AG04450 (cell line): ENCODE measurements at regions of chr17 and their contacts with region 1.

Region 1: DNA sequence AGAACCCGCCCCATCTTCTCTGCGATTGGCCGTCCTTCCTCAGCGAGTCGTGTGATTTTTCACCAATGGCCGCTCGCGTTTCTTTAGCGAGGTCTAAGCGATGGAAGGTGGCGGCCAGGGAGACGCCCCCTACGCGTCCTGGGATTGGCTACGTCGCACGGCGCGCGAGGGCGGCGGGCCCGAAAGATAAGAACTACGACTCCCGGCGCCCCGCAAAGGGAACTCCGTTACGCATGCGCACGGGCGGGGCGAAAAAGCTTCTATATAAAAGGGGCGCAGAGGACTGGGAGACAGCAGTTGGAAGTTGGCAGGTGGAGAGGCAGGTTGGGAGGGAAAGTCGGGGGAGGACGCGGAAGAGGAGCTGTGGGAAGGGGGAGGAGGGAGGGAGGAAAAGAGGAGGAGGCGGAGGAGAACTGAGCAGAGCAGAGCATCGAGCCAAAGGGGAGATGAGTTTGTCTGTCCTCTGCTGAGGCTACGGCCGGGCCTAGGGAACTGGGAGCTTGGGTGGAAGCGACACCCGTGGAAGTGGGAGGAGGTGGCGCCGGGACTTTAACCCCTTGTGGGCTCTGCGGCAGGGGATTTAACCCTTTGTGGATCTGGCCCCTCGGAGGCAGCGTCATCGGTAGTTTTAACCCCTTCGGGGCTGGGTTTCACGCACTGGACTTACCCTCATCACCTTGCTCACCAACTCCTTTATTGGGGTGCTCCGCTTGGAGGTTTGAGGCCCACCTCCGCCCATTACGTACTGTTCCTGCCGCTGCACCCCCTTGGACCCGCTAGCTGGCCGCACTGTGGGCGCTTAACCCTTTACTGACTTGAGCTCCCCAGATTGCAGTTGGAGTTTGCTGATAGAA is at the start of gene HEXIM1:
- DNase-seq: peak; percentile 99
- H3K4me3 ChIP-seq: peak within 1 kb of the TSS; percentile 96
- H3K27ac ChIP-seq: peak within 1 kb of the TSS; percentile 98
- H3K27me3 ChIP-seq: no peaks in the 10 kb centered on the region
- CTCF ChIP-seq: no peak
- polyA plus RNA-seq, gene HEXIM1: 12.4 and 13.2 TPM in 2 replicates

Region 2: GRCh38 chr17:44899069-44899782 is 249.2 kb before region 1 on chr17 and contains the start of gene EFTUD2:
- CTCF ChIA-PET with region 1: no interaction called
- POLR2A ChIA-PET with region 1: interaction called, 12 read pairs
- DNase-seq: peak; percentile 74
- H3K4me3 ChIP-seq: peak within 1 kb of the TSS; percentile 98
- H3K27ac ChIP-seq: peak within 1 kb of the TSS; percentile 94
- H3K27me3 ChIP-seq: no peaks in the 10 kb centered on the region
- CTCF ChIP-seq: no peak
- polyA plus RNA-seq, gene EFTUD2: 123 and 147 TPM in 2 replicates

Region 3: DNA sequence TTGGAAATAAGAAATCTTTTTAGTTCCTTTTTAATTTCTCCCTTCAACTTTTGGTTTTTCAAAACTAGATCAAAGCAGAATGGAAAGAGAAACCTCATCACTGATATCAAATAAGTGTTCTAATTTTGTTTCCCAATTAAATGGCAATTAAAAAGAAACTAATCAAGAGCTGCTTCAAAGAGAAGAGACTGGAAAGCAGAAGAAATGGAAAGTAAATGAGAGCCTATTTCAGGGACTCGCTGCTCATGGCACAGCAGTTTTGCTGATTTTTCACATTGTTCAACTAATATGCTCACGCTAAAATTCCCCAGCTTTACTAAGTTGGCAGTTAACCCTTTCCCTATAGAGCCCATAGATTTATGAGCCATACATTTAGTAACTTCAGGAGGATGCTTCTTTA is 80.8 kb before region 1 on chr17:
- CTCF ChIA-PET with region 1: no interaction called
- POLR2A ChIA-PET with region 1: no interaction called
- DNase-seq: no peak
- H3K4me3 ChIP-seq: no peak overlapping the region
- H3K27ac ChIP-seq: no peak overlapping the region
- H3K27me3 ChIP-seq: no peaks in the 10 kb centered on the region
- CTCF ChIP-seq: no peak

Region 4: GRCh38 chr17:45114163-45114932 is 34.1 kb before region 1 on chr17:
- CTCF ChIA-PET with region 1: no interaction called
- POLR2A ChIA-PET with region 1: no interaction called
- DNase-seq: no peak
- H3K4me3 ChIP-seq: no peak overlapping the region
- H3K27ac ChIP-seq: no peak overlapping the region
- H3K27me3 ChIP-seq: no peaks in the 10 kb centered on the region
- CTCF ChIP-seq: no peak

Region 5: DNA sequence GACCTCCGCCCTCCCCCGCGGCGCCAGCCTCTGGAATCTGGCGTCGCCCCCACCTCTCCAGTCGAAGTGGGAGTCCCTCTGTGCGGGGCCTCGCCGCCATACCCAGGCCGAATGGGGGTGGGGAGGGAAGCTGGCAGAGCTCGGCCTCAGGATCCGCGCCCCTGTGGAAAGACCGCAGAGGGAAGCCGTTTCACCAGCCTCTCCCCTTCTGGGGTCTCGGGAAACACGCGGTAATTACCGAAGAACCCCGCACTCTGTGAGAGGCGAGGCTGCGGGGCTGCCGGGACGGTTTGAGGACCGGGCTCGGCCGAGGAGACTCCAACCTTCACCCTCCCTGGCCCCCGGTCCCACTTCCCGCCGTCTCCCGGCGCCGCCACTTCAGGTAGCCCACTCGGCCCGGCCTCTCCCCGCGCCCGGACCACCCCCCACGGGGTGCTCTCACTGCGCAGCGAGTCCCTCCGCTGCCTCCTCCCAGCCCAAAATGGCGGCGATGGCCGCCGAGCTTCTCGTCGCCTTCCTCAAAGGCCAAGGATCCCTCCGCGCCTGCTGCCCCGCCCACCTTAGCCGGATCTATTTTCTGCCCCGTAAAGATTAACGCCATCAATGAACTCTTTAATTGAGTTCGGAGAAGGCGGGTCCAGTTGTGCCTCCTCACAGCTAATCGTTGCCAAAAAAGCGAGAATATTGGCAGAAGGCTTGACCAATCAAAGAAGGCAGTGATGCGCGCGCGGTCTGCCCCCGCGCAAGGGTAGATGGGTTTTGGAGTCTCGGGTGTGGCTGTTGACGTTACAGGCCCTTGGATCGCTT is 12.8 kb after region 1 on chr17:
- CTCF ChIA-PET with region 1: interaction called, 51 read pairs
- POLR2A ChIA-PET with region 1: interaction called, 399 read pairs
- DNase-seq: peak; percentile 100
- H3K4me3 ChIP-seq: peak overlapping the region; percentile 90
- H3K27ac ChIP-seq: peak overlapping the region; percentile 97
- H3K27me3 ChIP-seq: no peaks in the 10 kb centered on the region
- CTCF ChIP-seq: no peak

Region 6: DNA sequence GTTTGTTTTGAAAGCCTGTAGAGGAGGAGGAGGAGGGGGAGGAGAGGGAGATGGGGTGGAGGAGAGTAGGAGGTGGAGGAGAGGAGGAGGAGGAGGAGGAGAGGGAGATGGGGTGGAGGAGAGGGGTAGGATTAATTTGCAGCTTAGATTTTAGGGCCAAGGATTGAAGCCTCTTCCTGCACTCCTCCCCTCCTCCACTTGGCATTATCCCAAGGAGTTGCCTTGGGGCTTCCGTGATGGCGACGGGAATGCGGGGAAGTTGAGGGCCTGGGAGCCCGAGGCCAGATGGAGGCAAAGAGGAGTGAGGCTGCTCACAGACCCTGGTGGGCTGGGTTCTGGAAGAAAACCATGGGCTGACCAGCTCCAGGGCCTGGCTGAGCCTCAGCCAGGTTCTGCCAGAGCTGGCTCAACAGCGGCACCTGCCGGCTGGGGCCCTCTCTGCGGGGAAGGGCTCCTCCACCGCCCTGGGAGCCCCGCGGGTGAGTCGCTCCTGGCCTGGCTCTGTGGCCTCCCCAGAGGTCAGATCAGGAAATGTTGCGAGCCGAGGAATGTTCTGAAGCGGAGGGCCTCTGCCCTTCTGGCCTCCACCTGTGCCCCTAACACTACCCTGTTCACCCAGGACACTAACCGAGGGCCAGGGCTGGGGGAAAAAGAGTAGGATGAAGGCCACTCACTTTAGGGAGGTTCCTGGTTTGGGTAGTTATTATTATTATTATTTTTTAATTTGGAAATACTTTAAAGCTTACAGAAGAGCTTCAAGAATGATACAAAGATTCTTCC is 49.3 kb after region 1 on chr17:
- CTCF ChIA-PET with region 1: interaction called, 154 read pairs
- POLR2A ChIA-PET with region 1: interaction called, 104 read pairs
- DNase-seq: peak; percentile 72
- H3K4me3 ChIP-seq: no peak overlapping the region; the same call in 1 of the 2 replicates
- H3K27ac ChIP-seq: peak overlapping the region; percentile 2
- H3K27me3 ChIP-seq: no peaks in the 10 kb centered on the region
- CTCF ChIP-seq: peak; percentile 99

Region 7: DNA sequence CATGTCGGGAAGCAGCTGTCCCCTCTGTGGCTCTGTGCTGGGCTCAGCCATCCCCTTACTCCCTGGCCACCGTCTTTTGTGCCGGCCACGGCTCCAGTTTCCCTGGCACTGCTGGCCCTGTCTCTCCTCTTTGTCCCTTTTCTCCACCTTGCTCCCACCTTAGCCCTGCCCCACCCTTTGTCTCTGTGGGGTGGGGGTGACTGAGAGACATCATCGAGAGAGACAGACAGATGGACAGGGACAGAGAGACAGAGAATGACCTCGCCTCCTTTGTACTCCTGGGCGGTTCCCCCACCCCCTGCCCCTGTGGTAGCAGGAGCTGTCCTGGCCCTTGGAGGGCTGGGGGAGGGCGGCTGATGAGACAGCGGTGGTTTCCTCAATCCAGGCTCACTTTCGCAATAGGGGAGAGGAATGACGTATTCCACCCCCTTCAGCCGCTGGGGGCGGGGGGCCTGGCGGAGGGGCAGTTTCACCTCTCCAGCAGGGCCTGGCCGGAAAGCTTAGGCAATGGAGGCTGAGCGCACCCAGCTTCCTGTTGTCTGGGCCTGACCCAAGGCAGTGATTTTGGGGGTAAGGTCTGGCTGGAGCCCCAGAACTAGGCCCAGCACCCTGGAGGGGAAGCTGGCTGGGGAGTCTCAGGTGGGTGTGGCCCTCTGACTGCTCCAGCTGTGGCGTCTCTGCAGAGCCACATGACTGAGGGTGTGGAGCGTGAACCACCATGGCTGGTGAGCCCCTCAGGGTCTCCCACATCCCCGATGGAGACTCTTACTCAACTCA is 80.5 kb after region 1 on chr17:
- CTCF ChIA-PET with region 1: interaction called, 4 read pairs
- POLR2A ChIA-PET with region 1: interaction called, 24 read pairs
- DNase-seq: peak; percentile 86
- H3K4me3 ChIP-seq: peak overlapping the region; percentile 22
- H3K27ac ChIP-seq: peak overlapping the region; percentile 89
- H3K27me3 ChIP-seq: peaks cover 3% of the 10 kb centered on the region
- CTCF ChIP-seq: no peak